Activated CD8-positive, alpha-beta T cell treated with anti-CD3 and anti-CD28 coated beads for 36 hours (primary cell): ENCODE measurements at regions of chr11 and their contacts with region 1.

Region 1: DNA sequence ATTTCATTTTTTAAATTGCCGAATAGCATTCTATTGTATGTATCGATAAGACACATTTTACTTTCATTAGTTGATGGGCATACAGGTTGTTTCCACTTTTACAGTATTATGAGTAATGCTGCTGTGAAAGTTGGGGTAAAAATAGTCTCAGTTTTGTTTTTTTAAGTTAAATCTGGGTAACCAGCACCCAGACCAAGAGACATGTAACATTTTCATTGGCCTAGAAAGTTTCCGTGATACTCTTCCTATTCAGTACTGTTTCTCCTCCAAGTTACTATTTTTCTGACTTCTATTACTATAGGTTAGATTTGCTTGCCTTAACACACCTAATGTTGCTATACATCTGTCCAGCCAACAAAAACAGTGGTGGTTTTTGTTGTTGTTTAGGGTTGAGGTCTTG is 12.3 kb downstream of the IPO7 start:
- DNase-seq: no peak
- ATAC-seq: peak; percentile 67
- H3K4me3 Mint-ChIP-seq: no peak overlapping the region
- H3K27ac Mint-ChIP-seq: peak overlapping the region; percentile 64
- H3K4me1 Mint-ChIP-seq: peaks cover 58% of the 10 kb centered on the region
- H3K27me3 Mint-ChIP-seq: no peaks in the 10 kb centered on the region
- CTCF ChIP-seq: no peak

Region 2: DNA sequence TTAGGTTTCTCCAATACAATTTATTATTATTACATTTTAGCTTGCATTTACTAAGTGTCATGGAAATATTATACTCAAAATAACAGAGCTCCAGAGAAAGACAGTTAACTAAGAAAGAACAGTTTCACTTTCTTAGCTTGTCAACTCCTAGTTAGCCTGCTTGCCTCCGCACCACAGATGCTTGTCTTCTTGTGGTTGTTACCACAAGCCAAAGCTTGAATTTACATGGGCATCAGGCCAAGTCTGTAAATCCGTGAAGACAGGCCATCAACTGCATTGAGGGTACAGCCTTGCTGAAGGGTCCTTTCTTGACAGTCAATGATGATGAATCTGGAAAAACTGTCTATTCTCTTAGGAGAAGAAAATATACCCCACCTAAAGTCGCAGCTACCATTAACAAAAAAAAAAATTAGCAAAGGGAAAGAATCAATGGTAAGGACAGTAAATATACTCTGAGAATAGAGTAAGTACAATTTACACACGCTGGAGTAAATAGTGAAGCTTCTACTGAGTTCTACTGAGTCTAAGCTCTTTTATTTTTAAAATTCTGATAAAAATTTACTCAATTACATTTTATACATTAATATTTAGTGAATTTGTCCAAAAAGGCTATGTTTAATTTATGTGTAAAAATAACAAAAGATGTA is 116.0 kb before region 1 on chr11:
- CTCF ChIA-PET with region 1: interaction called, 3 read pairs
- POLR2A ChIA-PET with region 1: no interaction called
- intact Hi-C with region 1: loop called (anchors 10 kb)
- DNase-seq: peak; percentile 76
- ATAC-seq: peak; percentile 90
- H3K4me3 Mint-ChIP-seq: no peak overlapping the region
- H3K27ac Mint-ChIP-seq: no peak overlapping the region
- H3K4me1 Mint-ChIP-seq: peaks cover 11% of the 10 kb centered on the region
- H3K27me3 Mint-ChIP-seq: no peaks in the 10 kb centered on the region
- CTCF ChIP-seq: no peak